MCF 10A (cell line): ENCODE measurements at regions of chr20 and their contacts with region 1.

Region 1: GRCh38 chr20:51306503-51307358 is 235.8 kb downstream of the NFATC2 start:
- DNase-seq: peak; percentile 73
- H3K4me3 Mint-ChIP-seq: no peak overlapping the region
- H3K27ac Mint-ChIP-seq: no peak overlapping the region
- H3K4me1 Mint-ChIP-seq: no peaks in the 10 kb centered on the region
- H3K27me3 Mint-ChIP-seq: no peaks in the 10 kb centered on the region
- CTCF ChIP-seq: peak; percentile 90

Region 2: DNA sequence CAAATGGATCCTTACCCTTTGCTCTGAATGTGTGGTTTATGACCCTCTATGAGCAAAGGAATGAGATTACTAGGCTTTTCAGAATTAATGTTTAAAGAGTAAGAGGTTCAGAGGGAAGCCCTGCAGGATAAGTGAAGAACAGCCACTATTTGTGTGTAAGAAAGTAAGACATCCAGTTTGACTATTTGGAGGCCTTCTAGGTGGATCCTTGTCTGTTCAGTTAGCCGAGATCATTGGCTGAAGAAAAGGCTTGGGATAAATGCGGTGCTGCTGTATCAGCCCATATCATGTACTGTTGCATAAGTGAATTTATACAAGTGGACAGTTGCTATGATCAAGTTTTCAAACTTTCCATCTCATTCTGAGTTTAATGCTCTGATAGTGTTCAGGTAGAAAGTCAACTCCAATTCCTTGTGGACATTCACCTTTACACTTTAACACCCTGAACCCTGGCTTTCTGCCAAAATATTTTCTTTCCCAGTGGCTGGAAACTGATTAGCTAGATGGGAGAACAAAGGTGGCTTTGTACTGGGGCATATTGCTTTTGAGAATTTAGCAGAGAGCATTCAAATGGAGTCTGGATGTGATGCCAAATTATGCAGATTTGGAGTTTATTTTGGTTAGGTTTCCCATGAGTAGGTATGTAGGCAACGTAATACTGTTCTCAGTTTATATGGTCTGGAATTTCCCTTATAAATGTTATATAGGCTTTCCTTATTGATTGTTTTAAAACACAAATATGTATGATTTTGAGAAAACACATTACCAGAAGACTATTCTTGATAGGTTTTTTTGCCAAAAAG is 560.4 kb before region 1 on chr20:
- CTCF ChIA-PET with region 1: no interaction called
- POLR2A ChIA-PET with region 1: no interaction called
- intact Hi-C with region 1: no loop called
- DNase-seq: no peak
- H3K4me3 Mint-ChIP-seq: no peak overlapping the region
- H3K27ac Mint-ChIP-seq: peak overlapping the region; percentile 69
- H3K4me1 Mint-ChIP-seq: peaks cover 11% of the 10 kb centered on the region
- H3K27me3 Mint-ChIP-seq: no peaks in the 10 kb centered on the region
- CTCF ChIP-seq: no peak

Region 3: GRCh38 chr20:50987592-50988210 is 319.0 kb before region 1 on chr20:
- CTCF ChIA-PET with region 1: interaction called, 810 read pairs
- POLR2A ChIA-PET with region 1: interaction called, 50 read pairs
- intact Hi-C with region 1: loop called (anchors 1 kb)
- DNase-seq: peak; percentile 90
- H3K4me3 Mint-ChIP-seq: no peak overlapping the region
- H3K27ac Mint-ChIP-seq: no peak overlapping the region
- H3K4me1 Mint-ChIP-seq: peaks cover 12% of the 10 kb centered on the region
- H3K27me3 Mint-ChIP-seq: no peaks in the 10 kb centered on the region
- CTCF ChIP-seq: peak; percentile 94

Region 4: GRCh38 chr20:51014797-51015722 is 291.7 kb before region 1 on chr20:
- CTCF ChIA-PET with region 1: interaction called, 70 read pairs
- POLR2A ChIA-PET with region 1: no interaction called
- intact Hi-C with region 1: loop called (anchors 1 kb)
- DNase-seq: peak; percentile 63
- H3K4me3 Mint-ChIP-seq: no peak overlapping the region
- H3K27ac Mint-ChIP-seq: no peak overlapping the region
- H3K4me1 Mint-ChIP-seq: peaks cover 10% of the 10 kb centered on the region
- H3K27me3 Mint-ChIP-seq: no peaks in the 10 kb centered on the region
- CTCF ChIP-seq: peak; percentile 71

Region 5: DNA sequence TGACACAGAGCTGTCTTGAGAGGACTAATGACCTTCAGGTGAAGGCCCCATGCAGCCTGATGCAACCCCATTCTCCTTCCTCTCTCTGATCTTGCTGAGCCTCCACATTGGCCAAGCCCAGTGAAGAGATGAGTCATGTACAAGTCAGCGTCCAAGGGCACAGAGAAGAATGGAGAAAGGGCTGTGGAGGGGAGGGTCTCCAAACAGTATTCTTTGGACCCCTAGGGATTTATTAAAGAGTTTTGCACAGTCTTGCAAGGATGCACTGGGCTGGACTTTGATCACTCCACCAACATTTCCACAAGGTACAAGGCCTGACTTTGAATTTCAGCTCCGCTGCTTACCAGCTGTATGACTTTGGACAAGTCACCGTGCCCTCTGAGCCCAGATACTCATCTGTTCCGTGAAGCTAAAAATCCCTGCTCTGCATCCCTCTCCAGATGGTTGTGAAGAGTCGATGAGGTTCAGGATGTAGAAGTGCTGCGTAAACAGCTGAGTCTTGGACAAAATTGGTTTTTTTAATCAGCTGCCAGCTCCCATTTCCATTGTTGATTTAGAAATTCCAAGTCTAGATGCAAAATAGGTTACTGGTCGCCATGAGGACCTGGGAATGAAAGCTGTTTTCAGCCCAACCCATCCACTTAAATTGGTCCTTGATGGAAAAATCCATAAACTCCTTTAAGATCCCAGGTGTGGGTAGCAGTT is 269.8 kb before region 1 on chr20:
- CTCF ChIA-PET with region 1: interaction called, 13 read pairs
- POLR2A ChIA-PET with region 1: no interaction called
- intact Hi-C with region 1: no loop called
- DNase-seq: peak; percentile 52
- H3K4me3 Mint-ChIP-seq: no peak overlapping the region
- H3K27ac Mint-ChIP-seq: peak overlapping the region; percentile 10
- H3K4me1 Mint-ChIP-seq: peaks cover 23% of the 10 kb centered on the region
- H3K27me3 Mint-ChIP-seq: no peaks in the 10 kb centered on the region
- CTCF ChIP-seq: no peak

Region 6: DNA sequence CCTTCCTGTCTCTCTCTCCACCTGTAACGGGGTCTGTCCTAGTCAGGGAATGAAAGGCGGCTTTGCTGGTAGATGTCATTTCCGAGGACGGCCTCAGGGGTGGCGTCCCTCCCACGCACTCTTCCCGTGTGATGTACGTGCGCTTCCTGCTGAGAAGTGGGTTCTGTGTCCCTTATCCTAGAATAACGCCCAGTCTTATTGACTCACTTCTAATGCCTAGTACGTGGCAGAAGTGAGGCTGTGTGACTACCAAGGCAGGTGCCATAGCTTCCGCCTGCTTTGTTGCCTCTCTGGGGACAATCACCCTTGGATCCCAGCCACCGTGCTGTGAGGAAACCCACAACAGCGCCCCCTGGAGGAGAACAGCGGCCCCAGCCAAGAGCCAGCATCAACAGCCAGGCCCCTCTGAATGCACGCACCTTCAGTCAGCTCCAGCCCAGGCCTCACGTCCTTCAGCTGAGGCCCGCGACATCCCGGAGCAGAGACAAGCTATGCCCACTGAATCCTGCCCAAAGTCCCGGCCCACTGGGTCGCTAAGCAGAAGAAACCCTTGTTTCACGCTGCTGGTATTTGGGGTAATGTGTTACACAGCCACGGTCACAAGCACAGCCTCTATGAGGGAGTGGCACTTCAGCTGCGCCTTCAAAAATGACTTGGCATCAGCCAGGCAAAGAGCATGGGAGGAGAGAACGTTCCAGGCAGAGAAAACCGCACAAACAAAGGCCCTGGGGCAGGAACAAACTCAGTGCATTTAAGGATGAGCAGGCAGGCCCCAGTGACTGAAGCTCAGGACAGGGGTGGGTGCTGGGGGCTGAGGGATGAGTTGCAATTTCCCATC is 11.5 kb after region 1 on chr20:
- CTCF ChIA-PET with region 1: interaction called, 142 read pairs
- POLR2A ChIA-PET with region 1: interaction called, 4 read pairs
- intact Hi-C with region 1: no loop called
- DNase-seq: peak; percentile 30
- H3K4me3 Mint-ChIP-seq: no peak overlapping the region
- H3K27ac Mint-ChIP-seq: no peak overlapping the region
- H3K4me1 Mint-ChIP-seq: peaks cover 5% of the 10 kb centered on the region
- H3K27me3 Mint-ChIP-seq: no peaks in the 10 kb centered on the region
- CTCF ChIP-seq: peak; percentile 43

Region 7: DNA sequence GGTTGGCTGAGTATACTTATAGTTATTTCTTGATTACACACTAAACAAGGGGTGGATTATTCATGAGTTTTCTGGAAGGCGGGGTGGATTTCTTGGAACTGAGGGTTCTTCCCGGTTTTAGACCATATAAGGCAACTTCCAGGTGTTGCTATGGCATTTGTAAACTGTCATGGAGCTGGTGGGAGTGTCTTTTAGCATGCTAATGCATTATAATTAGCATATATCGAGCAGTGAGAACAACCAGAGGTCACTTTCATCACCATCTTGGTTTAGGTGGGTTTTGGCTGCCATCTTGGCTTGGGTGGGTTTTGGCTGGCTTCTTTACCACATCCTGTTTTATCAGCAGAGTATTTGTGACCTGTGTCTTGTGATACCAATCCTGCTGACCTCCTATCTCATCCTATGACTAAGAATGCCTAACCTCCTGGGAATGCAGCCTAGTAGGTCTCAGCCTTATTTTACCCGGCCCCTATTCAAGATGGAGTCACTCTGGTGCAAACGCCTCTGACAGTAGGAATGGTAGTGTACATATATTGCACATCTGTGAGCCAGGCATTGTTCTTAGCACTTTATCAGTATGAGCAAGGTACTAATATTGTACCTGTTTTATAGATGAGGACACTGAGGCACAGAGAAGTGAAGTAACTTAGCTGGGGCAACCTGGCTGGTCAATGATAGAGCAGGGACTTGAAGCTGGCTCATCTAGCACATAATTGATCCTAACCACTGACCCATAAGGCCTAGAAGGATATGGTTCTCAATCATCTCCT is 32.1 kb after region 1 on chr20:
- CTCF ChIA-PET with region 1: interaction called, 11 read pairs
- POLR2A ChIA-PET with region 1: no interaction called
- intact Hi-C with region 1: no loop called
- DNase-seq: peak; percentile 38
- H3K4me3 Mint-ChIP-seq: no peak overlapping the region
- H3K27ac Mint-ChIP-seq: no peak overlapping the region
- H3K4me1 Mint-ChIP-seq: peaks cover 6% of the 10 kb centered on the region
- H3K27me3 Mint-ChIP-seq: no peaks in the 10 kb centered on the region
- CTCF ChIP-seq: no peak

Region 8: DNA sequence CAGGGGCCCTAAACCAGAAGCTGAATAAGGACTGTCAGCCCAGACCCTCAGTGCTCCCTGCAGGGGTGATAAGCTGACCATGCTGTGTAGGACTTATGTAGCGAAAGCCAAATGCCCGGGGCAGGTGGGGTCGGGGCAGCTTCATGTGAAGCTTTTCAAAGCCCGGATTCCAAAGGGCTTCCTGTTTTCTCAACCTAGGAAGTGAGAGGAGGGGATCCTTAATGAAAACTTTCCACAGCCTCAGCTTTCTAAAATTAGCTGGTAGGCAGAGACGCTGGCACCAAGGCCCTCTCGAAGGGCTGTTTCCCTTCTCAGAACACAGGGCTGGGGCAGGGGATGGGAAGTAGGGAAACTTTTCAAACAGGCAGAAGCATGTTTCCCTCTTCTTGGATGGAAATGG is 86.8 kb after region 1 on chr20:
- CTCF ChIA-PET with region 1: no interaction called
- POLR2A ChIA-PET with region 1: no interaction called
- intact Hi-C with region 1: no loop called
- DNase-seq: no peak
- H3K4me3 Mint-ChIP-seq: no peak overlapping the region
- H3K27ac Mint-ChIP-seq: no peak overlapping the region
- H3K4me1 Mint-ChIP-seq: no peaks in the 10 kb centered on the region
- H3K27me3 Mint-ChIP-seq: peaks cover 33% of the 10 kb centered on the region
- CTCF ChIP-seq: no peak